ENCODE measurements at regions of chr11 and their contacts with region 1.

Region 1: GRCh38 chr11:62081378-62082291 is 42.2 kb upstream of the INCENP start:
- DNase-seq: peak; percentile 74 to 87 (median 83)
- H3K4me3 ChIP-seq: no peak overlapping the region
- H3K27ac ChIP-seq: no peak overlapping the region
- H3K4me1 ChIP-seq: no peaks in the 10 kb centered on the region
- H3K27me3 ChIP-seq: no peaks in the 10 kb centered on the region
- CTCF ChIP-seq: peak; percentile 88 to 94 (median 93)
- EP300 ChIP-seq: no peak
- POLR2A ChIP-seq: no peak

Region 2: GRCh38 chr11:61891331-61892084 is 190.1 kb before region 1 on chr11 and contains the start of gene FADS3:
- intact Hi-C with region 1: loop called in 3 of 4 experiments (anchors 2 to 5 kb)
- DNase-seq: peak; percentile 84 to 88 (median 87)
- H3K4me3 ChIP-seq: peak within 1 kb of the TSS; percentile 75
- H3K27ac ChIP-seq: peak within 1 kb of the TSS; percentile 83
- H3K4me1 ChIP-seq: peaks cover 5% of the 10 kb centered on the region
- H3K27me3 ChIP-seq: no peaks in the 10 kb centered on the region
- CTCF ChIP-seq: no peak
- EP300 ChIP-seq: no peak
- POLR2A ChIP-seq: peak; percentile 36
- total RNA-seq, gene FADS3: 21.9 to 85.8 (median 41.3) TPM

Region 3: DNA sequence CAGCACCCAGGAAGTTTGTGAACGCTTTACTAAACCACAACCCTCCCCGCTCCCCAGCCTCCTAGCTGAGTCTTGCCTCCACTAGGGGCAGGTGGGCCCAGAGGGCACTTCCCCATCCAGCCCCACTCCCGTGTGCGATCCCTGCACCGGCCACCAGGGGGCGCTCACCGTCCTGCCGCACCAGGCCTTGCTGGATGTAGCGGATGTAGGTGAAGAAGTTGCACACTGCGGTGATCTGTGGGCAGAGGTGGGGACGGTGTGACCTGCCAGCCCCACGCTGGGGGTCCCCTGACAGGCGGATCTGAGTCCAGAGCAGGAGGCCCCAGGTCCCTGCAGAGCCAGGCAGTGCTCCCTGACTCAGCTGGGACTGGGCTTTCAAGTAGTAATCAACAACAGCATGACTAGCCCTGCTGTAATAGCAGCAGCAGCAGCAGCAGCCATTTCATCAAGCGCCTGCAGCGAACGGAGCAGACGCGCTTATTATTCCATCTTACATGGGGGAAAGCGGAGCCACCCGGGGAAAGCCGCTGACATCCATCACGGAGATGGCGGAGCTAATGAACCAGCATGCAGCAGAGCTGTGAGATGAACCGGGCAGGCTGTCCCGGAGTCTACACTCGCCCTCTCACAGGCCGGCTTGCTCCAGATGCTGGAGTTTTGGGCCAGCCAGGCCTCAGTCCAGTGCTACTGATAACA is 182.3 kb before region 1 on chr11:
- intact Hi-C with region 1: loop called (anchors 2 to 5 kb)
- DNase-seq: peak; percentile 74 to 90 (median 86)
- H3K4me3 ChIP-seq: no peak overlapping the region
- H3K27ac ChIP-seq: peak overlapping the region; percentile 17 to 57
- H3K4me1 ChIP-seq: peaks cover 3% of the 10 kb centered on the region
- H3K27me3 ChIP-seq: no peaks in the 10 kb centered on the region
- CTCF ChIP-seq: peak; percentile 96 to 99 (median 99)
- EP300 ChIP-seq: no peak
- POLR2A ChIP-seq: no peak

Region 4: GRCh38 chr11:61947486-61948210 is 134.0 kb before region 1 on chr11:
- intact Hi-C with region 1: loop called in 3 of 4 experiments (anchors 5 to 10 kb)
- DNase-seq: peak; percentile 93 to 95 (median 93)
- H3K4me3 ChIP-seq: no peak overlapping the region
- H3K27ac ChIP-seq: peak overlapping the region in 1 of 2 donors; percentile 1
- H3K4me1 ChIP-seq: peaks cover 12% of the 10 kb centered on the region
- H3K27me3 ChIP-seq: no peaks in the 10 kb centered on the region
- CTCF ChIP-seq: peak; percentile 93 to 98 (median 97)
- EP300 ChIP-seq: no peak
- POLR2A ChIP-seq: peak; percentile 36

Region 5: GRCh38 chr11:61954851-61955421 is 126.7 kb before region 1 on chr11:
- intact Hi-C with region 1: loop called in 3 of 4 experiments (anchors 5 to 10 kb)
- DNase-seq: peak; percentile 72 to 81 (median 73)
- H3K4me3 ChIP-seq: peak overlapping the region; percentile 47
- H3K27ac ChIP-seq: peak overlapping the region; percentile 35 to 75
- H3K4me1 ChIP-seq: peaks cover 7% of the 10 kb centered on the region
- H3K27me3 ChIP-seq: no peaks in the 10 kb centered on the region
- CTCF ChIP-seq: peak in 2 of 3 donors; percentile 11 to 32
- EP300 ChIP-seq: no peak
- POLR2A ChIP-seq: peak; percentile 53

Region 6: DNA sequence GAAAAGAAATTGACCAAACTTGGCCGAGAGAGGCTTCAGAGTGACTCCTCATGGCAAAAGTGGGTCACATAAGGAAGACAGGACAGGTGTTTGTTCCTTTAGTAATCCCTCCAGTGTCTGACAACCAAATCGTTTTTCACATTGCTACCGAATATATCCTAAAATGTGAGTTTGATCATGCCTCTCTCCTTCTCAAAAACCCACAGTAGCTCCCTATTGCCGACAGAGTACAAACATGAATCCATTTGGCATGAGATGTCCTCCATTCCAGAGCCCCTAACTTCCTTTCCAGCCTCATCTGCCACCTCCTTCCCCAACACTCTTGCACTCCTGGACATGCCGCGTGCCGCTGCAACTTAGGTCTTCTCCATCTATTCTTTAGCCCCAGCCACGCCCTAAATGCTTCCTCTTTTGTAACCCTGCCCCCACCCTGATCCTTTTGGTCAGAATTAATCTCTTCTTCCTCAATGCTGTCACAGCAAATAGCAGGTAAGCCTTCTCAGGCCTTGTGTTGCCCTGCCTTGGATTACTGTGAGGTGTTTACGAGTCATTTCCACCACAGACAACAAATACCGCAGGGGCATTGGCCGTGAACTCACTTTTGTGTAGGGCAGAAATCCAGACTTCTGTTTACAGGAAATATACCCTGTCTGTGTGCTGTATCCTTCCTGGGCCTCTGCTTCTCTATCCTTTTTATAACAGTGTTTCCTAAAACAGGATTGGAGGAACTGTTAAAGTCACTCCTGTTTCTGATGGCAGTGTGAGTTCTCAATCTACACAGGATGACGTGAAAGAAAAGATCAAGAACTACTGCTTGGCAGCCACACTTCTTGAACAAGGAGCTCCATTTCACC is 48.2 kb before region 1 on chr11:
- intact Hi-C with region 1: no loop called
- DNase-seq: no peak
- H3K4me3 ChIP-seq: no peak overlapping the region
- H3K27ac ChIP-seq: no peak overlapping the region
- H3K4me1 ChIP-seq: no peaks in the 10 kb centered on the region
- H3K27me3 ChIP-seq: no peaks in the 10 kb centered on the region
- CTCF ChIP-seq: no peak
- EP300 ChIP-seq: no peak
- POLR2A ChIP-seq: no peak